ENCODE measurements at regions of chr12 and their contacts with region 1.

Region 1: GRCh38 chr12:5432011-5432400 is at the start of gene NTF3:
- DNase-seq: no peak
- ATAC-seq: peak; percentile 60
- total RNA-seq, gene NTF3: 5.9 TPM

Region 2: DNA sequence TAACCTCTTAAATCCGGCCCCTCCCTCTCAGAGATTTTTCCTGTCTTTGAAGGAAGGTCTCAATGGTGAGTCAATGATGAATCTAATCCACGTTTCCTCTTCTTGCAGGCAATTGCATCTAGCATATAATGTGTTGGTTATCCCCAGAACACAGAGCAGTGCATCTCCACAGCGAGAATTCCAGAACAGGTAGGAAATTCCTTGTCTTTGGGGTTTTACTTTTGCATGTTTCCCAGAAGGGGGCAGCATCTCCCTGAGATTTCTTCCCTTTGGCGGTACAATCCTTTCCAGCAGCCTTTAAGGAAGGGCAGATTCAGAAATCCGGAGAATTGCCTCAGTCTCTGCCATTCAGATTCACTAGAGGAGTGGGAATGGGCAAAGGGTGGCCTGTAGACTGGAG is 260.3 kb before region 1 on chr12:
- intact Hi-C with region 1: loop called (anchors 10 kb)
- DNase-seq: no peak
- ATAC-seq: peak; percentile 36

Region 3: DNA sequence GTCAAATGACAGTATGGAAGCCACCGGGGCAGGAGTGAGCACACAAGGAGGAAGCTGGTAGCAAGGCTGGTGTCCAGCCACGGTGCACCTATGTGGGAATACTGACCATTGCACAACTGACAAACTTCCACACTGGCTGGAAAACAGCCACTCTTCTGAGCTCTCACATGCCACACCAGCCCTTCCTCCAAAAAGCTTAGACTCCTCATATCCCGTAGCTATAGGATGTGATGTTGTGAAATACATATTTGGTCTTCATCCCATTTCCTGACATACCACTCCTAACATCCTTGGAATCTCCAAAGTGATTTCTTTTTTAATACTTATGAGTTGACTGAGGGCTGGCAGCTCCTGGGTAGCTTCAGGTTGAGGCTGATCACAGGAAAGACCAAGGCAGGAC is 103.5 kb after region 1 on chr12:
- intact Hi-C with region 1: no loop called
- DNase-seq: no peak
- ATAC-seq: no peak

Region 4: DNA sequence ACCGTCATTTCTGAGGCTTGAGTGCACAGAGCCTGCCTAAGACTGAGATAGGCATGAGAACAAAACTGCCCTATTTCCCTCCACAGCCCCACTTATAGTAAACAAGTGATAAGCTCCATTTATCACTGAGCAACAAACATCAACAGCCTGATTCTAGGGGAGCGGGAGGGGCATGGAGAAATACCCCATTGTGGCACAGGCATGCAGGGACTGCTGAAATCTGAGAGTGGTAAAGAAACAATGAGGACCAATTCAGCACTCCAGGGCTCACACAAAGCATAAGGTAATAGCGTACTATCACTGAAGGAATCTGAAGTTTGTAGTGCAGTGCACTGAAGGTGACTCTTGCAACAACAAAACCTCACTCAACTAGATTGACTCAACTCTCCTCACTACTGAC is 326.3 kb after region 1 on chr12:
- intact Hi-C with region 1: no loop called
- DNase-seq: no peak
- ATAC-seq: no peak

Region 5: GRCh38 chr12:6278439-6279255 is 846.6 kb after region 1 on chr12:
- intact Hi-C with region 1: loop called (anchors 5 kb)
- DNase-seq: peak; percentile 89
- ATAC-seq: peak; percentile 92